Activated B cell treated with CpG ODN at 0.5 μM for 24 hours (primary cell): ENCODE measurements at regions of chr17 and their contacts with region 1.

Region 1: GRCh38 chr17:6421700-6422604 is 13.0 kb downstream of the AIPL1 start:
- DNase-seq: peak; percentile 55
- ATAC-seq: peak; percentile 49
- H3K4me3 Mint-ChIP-seq: no peak overlapping the region
- H3K27ac Mint-ChIP-seq: no peak overlapping the region
- H3K4me1 Mint-ChIP-seq: peaks cover 2% of the 10 kb centered on the region
- H3K27me3 Mint-ChIP-seq: peaks cover 8% of the 10 kb centered on the region
- CTCF ChIP-seq: no peak

Region 2: DNA sequence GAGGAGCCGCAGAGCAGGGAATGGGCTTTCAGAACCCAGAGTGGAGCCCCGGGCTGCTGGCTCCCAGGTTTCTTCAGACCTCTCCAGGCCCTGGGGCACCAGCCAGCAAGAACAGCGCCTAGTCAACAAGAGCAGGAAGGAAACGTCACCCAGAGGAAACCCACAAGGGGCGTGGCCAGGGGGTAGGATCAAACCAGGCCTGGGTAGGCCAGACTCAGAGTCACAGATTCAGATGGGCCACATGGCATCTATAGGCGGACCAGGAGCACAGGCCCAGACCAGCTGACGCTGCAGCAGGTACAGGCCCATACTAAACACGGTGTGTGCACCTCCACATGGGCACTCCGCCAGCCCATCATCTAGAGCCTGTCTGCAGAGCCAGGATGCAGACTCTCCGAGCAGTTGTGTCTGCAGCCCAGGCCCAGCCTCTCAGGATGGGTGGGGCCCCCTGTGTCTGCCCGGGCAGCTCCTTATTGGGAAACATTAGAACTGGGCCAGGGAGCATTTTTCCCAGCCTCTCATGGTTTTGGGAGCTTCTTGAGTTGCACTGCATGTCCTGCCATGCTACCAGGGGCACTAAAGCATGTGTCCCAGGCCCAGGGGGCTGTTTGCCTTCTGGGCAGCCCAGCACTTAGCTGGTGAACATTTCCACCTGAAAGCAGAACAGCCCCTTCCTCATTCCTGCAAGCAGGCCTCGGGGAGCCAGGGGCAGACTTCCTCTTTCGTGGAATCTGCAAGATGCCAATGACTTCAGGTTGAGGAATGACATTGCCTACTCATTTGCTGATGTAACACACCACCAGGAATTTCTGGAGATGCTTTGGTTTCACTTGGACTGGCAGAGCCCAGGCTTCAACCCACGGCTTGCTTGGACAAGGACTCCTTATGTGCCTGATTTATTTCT is 837.3 kb before region 1 on chr17 and contains the start of gene NLRP1:
- CTCF ChIA-PET with region 1: interaction called, 22 read pairs
- POLR2A ChIA-PET with region 1: no interaction called
- intact Hi-C with region 1: loop called (anchors 1 kb)
- DNase-seq: peak; percentile 78
- ATAC-seq: peak; percentile 96
- H3K4me3 Mint-ChIP-seq: peak within 1 kb of the TSS; percentile 92
- H3K27ac Mint-ChIP-seq: peak within 1 kb of the TSS; percentile 93
- H3K4me1 Mint-ChIP-seq: peaks cover 66% of the 10 kb centered on the region
- H3K27me3 Mint-ChIP-seq: no peaks in the 10 kb centered on the region
- CTCF ChIP-seq: no peak
- total RNA-seq, gene NLRP1: 35.5 and 40.4 TPM in 2 replicates

Region 3: GRCh38 chr17:5592382-5592781 is 829.6 kb before region 1 on chr17:
- CTCF ChIA-PET with region 1: interaction called, 22 read pairs
- POLR2A ChIA-PET with region 1: no interaction called
- intact Hi-C with region 1: loop called (anchors 1 kb)
- DNase-seq: no peak
- ATAC-seq: no peak
- H3K4me3 Mint-ChIP-seq: no peak overlapping the region
- H3K27ac Mint-ChIP-seq: no peak overlapping the region
- H3K4me1 Mint-ChIP-seq: peaks cover 1% of the 10 kb centered on the region
- H3K27me3 Mint-ChIP-seq: peaks cover 30% of the 10 kb centered on the region
- CTCF ChIP-seq: no peak

Region 4: DNA sequence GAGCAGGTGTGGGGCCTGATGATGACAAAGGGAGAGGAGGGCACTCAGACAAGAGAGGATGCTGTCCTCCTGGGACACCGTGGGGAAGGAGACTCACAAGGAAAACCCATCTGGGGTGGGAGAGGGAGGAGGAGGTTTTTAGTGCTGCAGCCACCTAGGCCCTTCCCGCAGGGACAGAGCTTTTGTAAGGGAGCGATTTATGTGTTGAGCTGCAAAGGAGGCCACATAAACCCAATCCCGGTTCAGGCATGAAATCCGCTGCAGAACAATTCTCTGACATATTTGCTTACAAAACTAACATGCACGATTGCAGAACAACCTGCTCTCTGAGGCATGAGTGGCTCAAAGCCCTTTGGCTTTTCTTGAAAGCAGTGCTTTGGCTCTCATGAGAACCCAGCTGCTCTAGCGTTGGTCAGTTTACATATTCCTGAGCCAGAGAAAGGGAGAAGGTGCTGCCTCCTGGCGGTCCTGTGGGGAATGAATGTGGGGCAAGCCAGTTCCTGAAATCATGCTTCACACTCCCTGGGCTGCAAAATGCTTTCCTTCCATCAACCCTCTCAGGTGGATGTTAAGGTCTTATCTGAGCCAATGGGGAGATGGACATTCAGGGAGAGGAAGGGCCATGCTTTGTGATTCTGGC is 715.3 kb before region 1 on chr17:
- CTCF ChIA-PET with region 1: no interaction called
- POLR2A ChIA-PET with region 1: no interaction called
- intact Hi-C with region 1: loop called (anchors 5 kb)
- DNase-seq: peak; percentile 42
- ATAC-seq: no peak
- H3K4me3 Mint-ChIP-seq: no peak overlapping the region
- H3K27ac Mint-ChIP-seq: no peak overlapping the region
- H3K4me1 Mint-ChIP-seq: no peaks in the 10 kb centered on the region
- H3K27me3 Mint-ChIP-seq: peaks cover 25% of the 10 kb centered on the region
- CTCF ChIP-seq: no peak